ENCODE measurements at regions of chr3 and their contacts with region 1.

Region 1: DNA sequence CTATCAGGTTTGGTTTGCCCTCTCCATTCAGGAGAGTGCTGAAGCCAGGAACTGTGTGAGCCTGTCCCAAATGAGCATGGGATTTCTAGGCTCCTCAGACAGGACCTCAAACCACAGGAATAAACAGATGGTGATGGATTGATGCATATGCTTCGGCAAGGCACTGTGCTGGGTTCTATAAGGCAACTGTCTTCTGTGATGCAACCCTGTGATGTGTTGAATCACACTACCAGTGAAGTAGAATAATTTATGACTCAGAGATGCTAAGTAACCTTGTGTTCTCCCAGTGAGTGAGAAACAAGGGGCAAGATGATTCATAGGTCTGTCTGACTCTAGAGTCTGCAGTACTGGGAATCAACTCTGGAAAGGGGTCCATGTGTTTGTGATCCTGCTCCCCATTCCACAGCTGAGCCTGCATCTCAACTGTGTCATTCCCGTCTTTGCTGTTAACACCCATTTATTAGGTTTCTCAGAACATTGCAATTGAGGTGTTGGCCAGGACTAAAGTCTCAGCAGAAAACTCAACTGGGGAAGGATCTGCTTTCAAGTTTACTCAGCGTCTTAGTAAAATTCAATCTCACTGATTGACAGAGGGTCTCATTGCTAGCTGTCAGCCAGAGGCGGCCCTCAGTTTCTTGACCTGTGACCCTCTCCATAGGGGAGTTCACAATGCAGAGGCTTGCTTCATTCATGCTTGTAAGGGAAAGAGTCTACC is 510.1 kb upstream of the CFAP20DC start:
- DNase-seq: no peak
- ATAC-seq: no peak
- H3K4me3 ChIP-seq: no peak overlapping the region
- H3K27ac ChIP-seq: no peak overlapping the region
- H3K4me1 ChIP-seq: no peaks in the 10 kb centered on the region
- H3K27me3 ChIP-seq: no peaks in the 10 kb centered on the region
- CTCF ChIP-seq: no peak
- EP300 ChIP-seq: no peak
- POLR2A ChIP-seq: no peak
- RAD21 ChIP-seq: no peak

Region 2: DNA sequence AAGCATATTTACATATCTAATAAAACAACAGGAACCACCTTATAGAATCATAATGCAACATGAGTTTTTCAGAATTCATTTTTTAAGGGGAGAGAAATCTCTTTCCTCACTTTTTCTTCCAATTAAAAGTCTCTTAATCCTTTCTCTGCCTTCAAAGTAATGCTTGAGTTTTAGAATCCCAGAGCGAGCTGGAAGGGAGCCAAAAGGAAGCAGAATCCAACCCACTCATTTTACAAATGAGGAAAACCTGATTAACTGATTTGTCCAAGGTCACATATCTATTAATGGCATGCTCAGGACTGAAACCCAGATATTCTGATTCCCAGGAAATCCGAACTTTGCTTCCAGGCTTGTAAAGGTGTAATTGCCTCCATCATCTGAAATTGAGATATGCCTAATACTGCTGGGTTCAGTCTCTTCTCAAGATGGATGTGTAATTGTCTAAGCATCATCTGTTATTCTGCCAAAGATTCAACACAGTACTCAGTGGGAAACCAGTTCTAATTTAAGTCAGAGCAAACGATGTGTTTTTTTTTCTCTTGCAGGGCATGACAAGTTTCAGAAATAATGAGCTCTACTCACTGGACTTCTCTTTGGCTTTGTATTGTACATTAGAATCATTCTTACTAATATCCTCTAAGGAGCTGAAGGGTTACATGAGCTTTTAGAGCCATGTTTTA is 28.7 kb before region 1 on chr3:
- CTCF ChIA-PET with region 1: no interaction called
- POLR2A ChIA-PET with region 1: no interaction called
- in situ Hi-C with region 1: no loop called
- intact Hi-C with region 1: no loop called
- DNase-seq: no peak
- ATAC-seq: no peak
- H3K4me3 ChIP-seq: no peak overlapping the region
- H3K27ac ChIP-seq: no peak overlapping the region
- H3K4me1 ChIP-seq: no peaks in the 10 kb centered on the region
- H3K27me3 ChIP-seq: no peaks in the 10 kb centered on the region
- CTCF ChIP-seq: no peak
- EP300 ChIP-seq: no peak
- POLR2A ChIP-seq: no peak
- RAD21 ChIP-seq: no peak

Region 3: GRCh38 chr3:61381745-61382392 is 1822.0 kb after region 1 on chr3:
- CTCF ChIA-PET with region 1: no interaction called
- POLR2A ChIA-PET with region 1: no interaction called
- in situ Hi-C with region 1: loop called (anchors 25 kb)
- intact Hi-C with region 1: no loop called
- DNase-seq: peak; percentile 17 to 34 (median 22)
- ATAC-seq: peak; percentile 81
- H3K4me3 ChIP-seq: no peak overlapping the region
- H3K27ac ChIP-seq: no peak overlapping the region
- H3K4me1 ChIP-seq: no peaks in the 10 kb centered on the region
- H3K27me3 ChIP-seq: no peaks in the 10 kb centered on the region
- CTCF ChIP-seq: peak; percentile 14 to 61 (median 56); a peak in 5 of 6 replicates
- EP300 ChIP-seq: no peak
- POLR2A ChIP-seq: no peak
- RAD21 ChIP-seq: peak; percentile 57 to 66